Esophagus squamous epithelium (tissue), 5 donors: ENCODE measurements at regions of chr5 and their contacts with region 1.

Region 1: GRCh38 chr5:139968547-139969261 is 74.4 kb downstream of the NRG2 start:
- DNase-seq: peak; percentile 10
- H3K4me3 ChIP-seq: no peak overlapping the region
- H3K27ac ChIP-seq: no peak overlapping the region
- H3K4me1 ChIP-seq: peaks cover 4 to 14% (median 4%) of the 10 kb centered on the region in 3 donors
- H3K27me3 ChIP-seq: no peaks in the 10 kb centered on the region
- CTCF ChIP-seq: peak; percentile 98 to 100 (median 100)
- POLR2A ChIP-seq: no peak

Region 2: GRCh38 chr5:139774980-139775661 is 193.6 kb before region 1 on chr5:
- intact Hi-C with region 1: no loop called
- DNase-seq: no peak
- H3K4me3 ChIP-seq: peak overlapping the region in 1 of 4 donors; percentile 30
- H3K27ac ChIP-seq: no peak overlapping the region
- H3K4me1 ChIP-seq: peaks cover 0 to 8% (median 0%) of the 10 kb centered on the region in 3 donors
- H3K27me3 ChIP-seq: peaks cover 0 to 6% (median 0%) of the 10 kb centered on the region in 4 donors
- CTCF ChIP-seq: peak; percentile 60 to 96 (median 84)
- POLR2A ChIP-seq: no peak

Region 3: DNA sequence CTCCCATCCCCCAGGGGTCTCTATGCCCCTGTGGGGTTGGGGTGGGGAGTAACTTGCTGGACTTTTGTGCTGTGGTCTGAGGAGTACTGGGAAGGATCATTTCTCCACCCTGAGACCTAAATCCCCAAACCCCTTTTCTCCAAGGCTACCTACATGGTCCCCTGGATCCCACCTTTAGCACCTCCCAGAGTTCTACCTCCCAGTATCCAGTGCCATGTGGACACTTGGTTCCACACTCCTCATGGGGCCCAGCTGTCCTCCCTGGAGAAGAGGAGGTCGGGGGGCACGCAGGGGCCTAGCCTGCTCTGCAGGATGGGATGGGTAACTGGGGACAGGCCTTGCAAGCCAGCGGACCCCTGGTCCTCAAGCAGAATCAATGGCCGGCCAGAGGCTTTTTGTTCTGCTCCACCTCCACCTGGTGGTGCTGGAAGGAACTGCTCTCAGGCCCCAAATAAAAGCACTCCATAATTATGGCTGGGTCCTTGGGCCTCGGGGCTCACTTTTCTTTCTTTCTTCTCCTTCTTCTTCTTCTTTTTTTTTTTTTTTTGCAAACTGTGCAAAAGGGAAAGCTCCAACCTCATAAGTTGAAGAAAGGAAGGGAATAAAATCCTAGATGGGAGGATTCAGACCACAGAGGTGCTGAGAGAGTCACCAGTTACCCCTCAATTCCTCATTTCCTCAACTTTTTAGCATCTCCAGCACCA is 104.7 kb before region 1 on chr5:
- intact Hi-C with region 1: loop called (anchors 10 kb)
- DNase-seq: no peak
- H3K4me3 ChIP-seq: no peak overlapping the region
- H3K27ac ChIP-seq: peak overlapping the region; percentile 23 to 43 (median 30)
- H3K4me1 ChIP-seq: peaks cover 9 to 33% (median 16%) of the 10 kb centered on the region in 3 donors
- H3K27me3 ChIP-seq: no peaks in the 10 kb centered on the region
- CTCF ChIP-seq: peak; percentile 76 to 96 (median 90)
- POLR2A ChIP-seq: no peak